ENCODE measurements at regions of chr14 and their contacts with region 1.

Region 1: GRCh38 chr14:67666750-67667449 is 7.5 kb downstream of the VTI1B start:
- DNase-seq: no peak
- H3K4me3 ChIP-seq: no peak overlapping the region
- H3K27me3 ChIP-seq: no peaks in the 10 kb centered on the region
- CTCF ChIP-seq: peak; percentile 65

Region 2: DNA sequence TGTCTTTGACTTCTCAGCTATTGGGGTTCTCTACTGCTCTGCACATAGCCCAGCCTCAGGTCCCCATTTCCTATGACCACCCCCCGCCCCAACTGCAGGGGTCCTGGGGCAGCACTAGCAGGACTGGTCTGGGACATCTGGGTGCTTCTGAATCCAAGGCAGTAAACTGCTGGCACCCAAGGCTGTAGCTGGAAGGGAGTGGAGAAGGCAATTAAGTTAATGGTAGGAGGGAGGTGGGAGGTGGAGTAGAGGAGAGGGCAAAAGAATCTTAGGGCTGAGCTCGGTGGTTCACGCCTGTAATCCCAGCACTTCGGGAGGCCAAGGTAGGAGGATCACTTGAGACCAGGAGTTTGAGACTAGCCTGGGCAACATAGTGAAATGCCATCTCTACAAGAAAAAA is 266.5 kb before region 1 on chr14:
- CTCF ChIA-PET with region 1: no interaction called
- POLR2A ChIA-PET with region 1: no interaction called
- DNase-seq: no peak
- H3K4me3 ChIP-seq: no peak overlapping the region
- H3K27me3 ChIP-seq: no peaks in the 10 kb centered on the region
- CTCF ChIP-seq: no peak

Region 3: GRCh38 chr14:67547282-67547681 is 119.6 kb before region 1 on chr14:
- CTCF ChIA-PET with region 1: no interaction called
- POLR2A ChIA-PET with region 1: no interaction called
- DNase-seq: no peak
- H3K4me3 ChIP-seq: no peak overlapping the region
- H3K27me3 ChIP-seq: peaks cover 6% of the 10 kb centered on the region; the same call in 1 of the 2 replicates
- CTCF ChIP-seq: no peak

Region 4: DNA sequence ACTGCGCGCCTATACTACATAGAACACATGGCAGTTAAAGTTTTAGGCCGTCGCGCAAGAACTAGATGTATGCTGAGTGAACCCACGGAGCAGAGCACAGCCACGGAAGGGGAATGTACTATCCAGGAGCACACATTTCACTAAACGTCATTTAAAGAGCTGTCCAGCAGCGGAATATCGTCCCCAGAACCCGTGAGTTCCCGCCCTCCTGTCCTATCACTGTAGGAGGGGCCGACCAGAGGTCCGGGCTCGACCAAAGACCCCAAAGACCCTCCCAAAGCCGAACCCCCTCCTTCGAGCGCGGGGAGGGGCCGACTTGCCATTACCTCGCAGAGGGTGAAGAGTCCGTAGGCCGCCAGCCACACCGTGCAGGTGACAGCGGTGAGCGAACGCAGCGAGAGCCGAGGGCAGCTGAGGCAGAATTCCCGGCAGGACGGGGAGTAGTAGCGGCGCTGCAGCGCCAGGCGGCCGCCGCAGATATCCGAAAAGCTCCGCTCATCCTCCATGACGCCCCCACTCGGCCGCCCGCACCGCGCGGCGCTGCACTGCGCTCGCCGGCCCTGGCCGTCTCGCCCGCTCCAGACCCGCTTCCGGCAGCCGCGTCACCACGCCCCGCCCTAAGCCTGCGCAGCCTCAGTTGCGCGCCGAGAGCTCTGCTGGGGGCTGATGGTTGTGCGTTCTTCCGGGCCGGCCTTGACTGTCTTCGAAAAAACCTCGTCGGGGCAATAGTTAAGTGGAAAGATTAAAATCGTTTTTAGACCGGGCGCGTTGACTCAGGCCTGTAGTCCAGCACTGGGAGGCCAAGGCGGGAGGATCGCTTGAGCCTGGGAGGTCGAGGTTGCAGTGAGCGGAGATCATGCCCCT is 67.0 kb before region 1 on chr14 and contains the start of gene PIGH:
- CTCF ChIA-PET with region 1: interaction called, 11 read pairs
- POLR2A ChIA-PET with region 1: no interaction called
- DNase-seq: peak; percentile 17
- H3K4me3 ChIP-seq: peak within 1 kb of the TSS; percentile 94
- H3K27me3 ChIP-seq: no peaks in the 10 kb centered on the region; the same call in 1 of the 2 replicates
- CTCF ChIP-seq: peak; percentile 57
- polyA plus RNA-seq, gene PIGH: 18.3 and 19.0 TPM in 2 replicates

Region 5: DNA sequence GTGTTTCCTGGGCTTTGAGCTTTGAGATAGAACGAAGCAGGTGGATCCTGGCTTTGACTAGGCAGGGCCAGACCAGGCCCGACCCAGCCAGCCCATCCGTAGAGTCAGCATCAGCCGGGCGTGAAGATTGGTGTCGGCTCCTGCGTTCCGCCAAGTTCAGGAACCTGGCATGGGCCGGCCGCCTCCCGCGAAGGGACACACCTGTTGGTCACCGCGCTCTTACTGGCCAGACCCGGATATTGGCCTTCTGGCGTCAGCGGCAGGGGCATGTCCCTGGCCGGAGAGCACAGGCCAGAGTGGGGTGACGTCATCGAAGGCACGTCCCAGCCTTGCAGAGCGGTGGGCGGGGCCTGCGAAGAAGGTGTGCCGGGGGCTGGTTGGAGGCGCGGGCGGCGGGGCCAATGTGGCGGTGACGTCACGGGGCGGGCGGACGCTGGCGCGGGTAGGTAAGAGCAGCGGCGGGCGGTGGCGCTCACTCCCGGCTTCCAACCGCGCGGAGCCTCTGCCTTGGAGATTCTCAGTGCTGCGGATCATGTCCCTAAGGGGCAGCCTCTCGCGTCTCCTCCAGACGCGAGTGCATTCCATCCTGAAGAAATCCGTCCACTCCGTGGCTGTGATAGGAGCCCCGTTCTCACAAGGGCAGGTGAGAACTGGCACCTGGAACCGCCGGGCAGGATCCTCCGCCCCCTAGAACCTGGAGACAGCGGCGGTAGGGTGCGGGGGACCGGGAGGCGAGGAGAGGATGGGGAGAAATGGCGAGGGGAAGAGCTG is 47.3 kb before region 1 on chr14 and contains the start of gene ARG2:
- CTCF ChIA-PET with region 1: interaction called, 105 read pairs
- POLR2A ChIA-PET with region 1: no interaction called
- DNase-seq: peak; percentile 41
- H3K4me3 ChIP-seq: peak within 1 kb of the TSS; percentile 63
- H3K27me3 ChIP-seq: no peaks in the 10 kb centered on the region
- CTCF ChIP-seq: no peak
- polyA plus RNA-seq, gene ARG2: 7.0 and 7.7 TPM in 2 replicates

Region 6: DNA sequence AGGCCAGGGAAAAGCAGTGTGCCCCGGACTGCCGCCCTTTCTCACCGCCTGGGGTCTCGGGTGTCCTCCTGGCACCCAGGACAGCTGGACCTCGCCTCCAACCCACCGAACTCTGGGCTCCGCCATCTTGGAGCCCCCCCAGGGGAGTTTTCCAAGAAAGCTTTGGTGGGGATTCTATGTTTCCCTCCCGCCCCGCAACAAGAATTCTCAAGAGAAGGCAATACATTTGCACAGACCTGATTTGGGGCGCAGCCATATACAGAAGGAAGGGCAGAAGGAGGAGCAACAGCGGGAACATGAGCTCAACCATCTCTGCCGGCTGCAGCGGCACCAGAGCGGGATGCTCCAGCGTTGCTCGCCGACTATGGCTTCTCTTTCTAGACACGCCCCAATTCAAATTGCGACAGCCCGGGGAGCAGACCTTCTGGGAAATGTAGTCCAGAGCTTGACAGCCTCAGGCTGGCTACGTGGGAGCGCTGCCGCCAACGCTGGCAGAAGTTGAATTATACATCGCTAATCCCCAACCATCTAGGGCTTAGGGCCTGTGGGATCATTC is 28.6 kb after region 1 on chr14 and contains the start of gene RDH11:
- CTCF ChIA-PET with region 1: no interaction called
- POLR2A ChIA-PET with region 1: no interaction called
- DNase-seq: peak; percentile 48
- H3K4me3 ChIP-seq: peak within 1 kb of the TSS; percentile 64
- H3K27me3 ChIP-seq: no peaks in the 10 kb centered on the region
- CTCF ChIP-seq: no peak
- polyA plus RNA-seq, gene RDH11: 73.5 and 80.3 TPM in 2 replicates

Region 7: GRCh38 chr14:67710209-67710608 is 43.3 kb after region 1 on chr14:
- CTCF ChIA-PET with region 1: no interaction called
- POLR2A ChIA-PET with region 1: no interaction called
- DNase-seq: no peak
- H3K4me3 ChIP-seq: no peak overlapping the region
- H3K27me3 ChIP-seq: peaks cover 1% of the 10 kb centered on the region; the same call in 1 of the 2 replicates
- CTCF ChIP-seq: no peak

Measured in BJ (cell line).